ENCODE measurements at regions of chr11 and their contacts with region 1.

Region 1: DNA sequence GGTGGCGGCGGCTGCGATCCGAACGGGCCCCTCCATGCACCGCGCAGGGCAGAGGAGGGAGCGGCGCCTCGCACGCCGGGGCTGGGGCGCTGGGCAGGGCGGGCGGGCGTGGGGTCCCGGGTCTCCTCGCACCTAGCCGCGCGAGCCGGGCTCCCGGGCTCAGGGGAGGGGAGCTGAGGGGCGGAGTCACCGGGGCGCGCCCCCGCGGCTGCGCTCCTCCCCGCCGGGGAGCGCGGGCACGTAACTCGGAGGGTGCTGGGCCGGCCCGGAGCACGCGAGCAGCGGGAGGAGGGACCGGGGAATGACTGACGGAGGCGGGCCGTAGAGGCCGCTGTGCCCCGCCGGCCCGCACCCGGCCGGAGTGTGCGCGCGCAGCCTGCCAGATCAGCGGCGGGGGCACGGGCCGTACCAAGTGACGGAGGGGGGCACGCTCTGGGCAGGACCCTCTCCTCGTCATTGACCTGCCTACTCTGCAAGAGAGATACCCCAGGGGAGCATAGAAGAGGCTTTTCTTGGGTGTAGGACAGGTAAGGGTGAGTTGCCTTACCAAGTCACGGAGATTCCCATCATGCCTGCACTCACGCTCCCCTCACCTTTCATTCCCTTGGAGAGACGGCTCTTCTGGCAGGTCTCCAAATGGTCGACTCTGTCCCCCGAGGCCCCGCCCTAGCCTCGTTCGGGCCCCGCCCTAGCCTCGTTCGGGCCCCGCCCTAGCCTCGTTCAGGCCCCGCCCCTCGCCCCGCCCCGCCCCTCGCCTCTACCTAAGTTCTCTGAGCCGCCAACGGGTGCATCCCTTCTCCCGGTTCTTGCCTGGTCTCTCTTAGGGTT is at the start of gene CDON:
- DNase-seq: peak; percentile 93 to 96
- ATAC-seq: peak; percentile 99
- H3K4me3 ChIP-seq: peak within 1 kb of the TSS; percentile 79
- H3K27ac ChIP-seq: peak within 1 kb of the TSS; percentile 80
- H3K4me1 ChIP-seq: peaks cover 12% of the 10 kb centered on the region
- H3K27me3 ChIP-seq: peaks cover 0 to 16% (median 0%) of the 10 kb centered on the region in 3 donors
- CTCF ChIP-seq: no peak
- total RNA-seq, gene CDON: 1.3 to 5.6 (median 1.5) TPM

Region 2: GRCh38 chr11:126115816-126116331 is 53.0 kb after region 1 on chr11:
- intact Hi-C with region 1: loop called (anchors 5 kb)
- DNase-seq: peak; percentile 61 to 71
- ATAC-seq: peak; percentile 62 to 73 (median 68)
- H3K4me3 ChIP-seq: no peak overlapping the region
- H3K27ac ChIP-seq: peak overlapping the region; percentile 65
- H3K4me1 ChIP-seq: peaks cover 32% of the 10 kb centered on the region
- H3K27me3 ChIP-seq: peaks cover 0 to 1% (median 0%) of the 10 kb centered on the region in 3 donors
- CTCF ChIP-seq: peak; percentile 15

Region 3: DNA sequence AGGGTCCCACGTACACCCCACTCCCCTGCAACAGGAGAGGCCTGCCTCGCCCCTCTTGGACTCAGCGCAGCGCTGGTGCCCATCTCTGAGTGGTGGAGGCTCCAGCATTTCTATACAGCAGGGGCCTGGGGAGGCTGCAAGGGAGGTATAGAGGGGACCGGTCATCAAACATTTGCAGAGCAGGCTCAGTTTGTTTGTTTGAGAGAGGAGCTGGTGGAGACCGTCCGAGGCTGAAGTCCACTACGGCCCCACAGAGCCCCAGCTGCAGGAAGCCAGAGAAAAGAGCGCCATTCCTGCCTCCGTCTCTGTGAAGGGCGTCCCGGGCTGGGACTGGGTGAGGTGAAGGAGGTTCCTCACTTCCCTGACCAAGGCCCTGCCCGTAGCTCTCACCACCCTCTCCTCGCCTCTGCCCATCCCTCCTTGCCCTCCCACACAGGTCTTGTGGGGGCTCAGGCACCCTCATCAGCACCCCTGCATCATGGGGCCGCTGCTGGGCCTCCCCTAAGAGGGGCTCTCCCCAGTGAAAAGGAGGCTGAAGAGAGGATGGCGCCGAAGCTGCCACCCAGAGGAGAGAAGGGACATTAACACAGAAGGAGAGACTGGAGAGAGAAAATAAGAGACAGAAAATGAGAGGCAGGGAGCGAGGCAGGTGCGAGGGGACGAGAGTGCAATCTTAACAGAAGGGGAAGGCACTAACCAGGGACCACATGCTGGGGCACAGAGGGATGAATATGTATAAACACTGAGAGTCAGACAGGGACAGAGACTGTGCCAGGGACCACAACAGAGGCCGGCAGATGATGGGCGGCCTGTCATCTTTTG is 124.0 kb after region 1 on chr11:
- intact Hi-C with region 1: loop called (anchors 2 to 5 kb)
- DNase-seq: no peak
- ATAC-seq: peak in 1 of 4 donors; percentile 17
- H3K4me3 ChIP-seq: no peak overlapping the region
- H3K27ac ChIP-seq: peak overlapping the region; percentile 66
- H3K4me1 ChIP-seq: peaks cover 24% of the 10 kb centered on the region
- H3K27me3 ChIP-seq: no peaks in the 10 kb centered on the region
- CTCF ChIP-seq: no peak

Region 4: DNA sequence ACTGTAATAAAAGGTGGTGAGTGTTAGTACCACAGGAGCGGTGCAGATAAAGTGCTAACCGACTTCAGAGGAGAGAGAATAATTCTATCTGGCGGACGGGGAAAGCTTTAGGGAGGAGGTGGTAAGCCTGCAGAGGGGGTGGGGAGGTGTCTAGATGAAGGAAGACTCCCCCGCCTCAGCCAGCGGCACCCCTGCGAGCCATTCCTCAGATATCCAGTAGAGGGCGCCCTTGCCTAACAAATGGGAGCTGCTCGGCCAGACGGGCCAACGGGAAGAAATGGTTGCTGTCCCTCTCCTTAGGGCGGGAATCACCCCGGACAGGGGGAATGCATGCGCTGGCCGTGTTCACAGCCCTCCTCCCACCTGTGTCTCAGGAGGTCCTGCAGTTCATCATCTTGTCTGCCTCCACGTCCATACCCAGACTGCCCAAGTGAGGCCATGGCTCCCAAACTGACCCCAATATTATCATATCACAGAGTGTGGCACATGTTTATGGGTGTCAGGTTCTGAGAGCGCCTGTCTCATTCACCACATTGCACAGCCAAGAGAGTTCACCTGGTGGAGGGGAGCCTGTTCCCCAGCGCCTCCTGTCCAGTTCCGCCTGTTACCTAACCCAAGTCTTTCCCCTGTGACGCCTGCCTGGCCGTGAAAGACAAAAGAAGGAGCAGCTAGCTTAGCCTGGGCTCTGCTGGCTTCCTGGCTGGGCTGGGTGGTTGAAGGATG is 378.1 kb after region 1 on chr11:
- intact Hi-C with region 1: no loop called
- DNase-seq: peak; percentile 74 to 86
- ATAC-seq: peak; percentile 82 to 96 (median 87)
- H3K4me3 ChIP-seq: no peak overlapping the region
- H3K27ac ChIP-seq: no peak overlapping the region
- H3K4me1 ChIP-seq: no peaks in the 10 kb centered on the region
- H3K27me3 ChIP-seq: peaks cover 0 to 1% (median 0%) of the 10 kb centered on the region in 3 donors
- CTCF ChIP-seq: peak; percentile 97